ENCODE measurements at regions of chr5 and their contacts with region 1.

Region 1: GRCh38 chr5:126536874-126537273 is 58.1 kb downstream of the ALDH7A1 start:
- DNase-seq: no peak
- ATAC-seq: no peak
- H3K4me3 ChIP-seq: no peak overlapping the region
- H3K27ac ChIP-seq: no peak overlapping the region
- H3K4me1 ChIP-seq: no peaks in the 10 kb centered on the region
- H3K27me3 ChIP-seq: no peaks in the 10 kb centered on the region
- CTCF ChIP-seq: no peak
- EP300 ChIP-seq: no peak
- POLR2A ChIP-seq: no peak
- RAD21 ChIP-seq: no peak

Region 2: DNA sequence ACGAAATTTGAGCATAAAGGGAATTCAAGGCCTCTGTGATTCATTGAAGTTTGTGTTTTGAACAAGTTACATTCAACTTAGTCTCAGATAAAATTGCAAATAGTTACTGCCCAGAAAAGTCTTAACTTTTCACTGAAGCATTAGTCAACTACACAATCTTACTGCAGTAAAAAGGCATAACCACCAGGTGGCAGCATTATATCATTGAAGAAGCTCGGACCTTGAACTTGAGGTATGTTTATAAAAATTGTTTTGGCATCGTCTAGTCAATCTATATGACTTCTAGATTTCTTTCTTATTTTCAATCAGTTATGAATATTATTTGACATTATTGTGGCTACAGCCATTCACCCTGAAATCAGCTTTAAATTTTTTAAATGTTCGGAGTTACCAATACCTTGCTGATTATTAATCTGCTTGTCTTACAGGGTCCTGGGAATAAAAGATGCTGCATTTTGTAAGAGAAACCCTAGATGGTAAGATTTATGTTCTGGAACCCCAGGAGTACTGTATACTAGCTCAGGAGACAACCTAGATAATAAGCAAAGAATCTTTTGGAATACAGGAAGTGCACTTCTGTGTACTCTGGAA is 197.6 kb before region 1 on chr5:
- CTCF ChIA-PET with region 1: interaction called, 91 read pairs
- POLR2A ChIA-PET with region 1: interaction called, 3 read pairs
- RAD21 ChIA-PET with region 1: interaction called, 36 read pairs
- SMC1A ChIA-PET with region 1: interaction called, 41 read pairs
- in situ Hi-C with region 1: no loop called
- intact Hi-C with region 1: loop called (anchors 1 kb)
- DNase-seq: no peak
- ATAC-seq: peak; percentile 62
- H3K4me3 ChIP-seq: no peak overlapping the region
- H3K27ac ChIP-seq: no peak overlapping the region
- H3K4me1 ChIP-seq: no peaks in the 10 kb centered on the region
- H3K27me3 ChIP-seq: no peaks in the 10 kb centered on the region
- CTCF ChIP-seq: peak; percentile 60 to 80 (median 74); a peak in 5 of 6 replicates
- EP300 ChIP-seq: no peak
- POLR2A ChIP-seq: no peak
- RAD21 ChIP-seq: peak; percentile 89

Measured in GM12878 (cell line).